WTC11 (cell line): ENCODE measurements at regions of chr17 and their contacts with region 1.

Region 1: GRCh38 chr17:40531051-40531991 is 29.9 kb upstream of the TNS4 start:
- DNase-seq: peak; percentile 8
- ATAC-seq: no peak
- H3K4me3 Mint-ChIP-seq: no peak overlapping the region
- H3K27ac Mint-ChIP-seq: no peak overlapping the region
- H3K4me1 Mint-ChIP-seq: peaks cover 19% of the 10 kb centered on the region
- H3K27me3 Mint-ChIP-seq: no peaks in the 10 kb centered on the region; the same call in 1 of the 2 replicates
- CTCF ChIP-seq: no peak

Region 2: DNA sequence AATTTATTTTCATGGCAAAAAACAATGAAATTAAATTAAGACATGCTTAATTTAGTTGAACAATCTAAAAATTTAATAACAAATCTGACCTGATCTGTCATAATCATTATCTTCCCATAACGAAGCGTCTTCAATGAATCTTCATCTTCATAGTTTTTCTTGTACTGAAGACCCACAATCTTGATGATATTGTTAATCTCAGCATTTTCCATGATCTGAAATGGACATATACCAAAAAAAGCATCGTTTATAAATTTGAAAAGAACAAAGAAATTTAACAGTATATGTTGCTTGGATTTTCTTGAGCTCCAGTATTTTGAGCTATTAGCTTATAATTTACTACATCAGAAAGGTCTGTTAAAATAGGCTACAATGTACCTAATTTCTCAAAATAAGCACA is 123.9 kb before region 1 on chr17:
- CTCF ChIA-PET with region 1: interaction called, 11 read pairs
- POLR2A ChIA-PET with region 1: no interaction called
- DNase-seq: no peak
- ATAC-seq: no peak
- H3K4me3 Mint-ChIP-seq: no peak overlapping the region
- H3K27ac Mint-ChIP-seq: peak overlapping the region; percentile 60; the same call in 1 of the 2 replicates
- H3K4me1 Mint-ChIP-seq: peaks cover 32% of the 10 kb centered on the region
- H3K27me3 Mint-ChIP-seq: no peaks in the 10 kb centered on the region
- CTCF ChIP-seq: no peak

Region 3: DNA sequence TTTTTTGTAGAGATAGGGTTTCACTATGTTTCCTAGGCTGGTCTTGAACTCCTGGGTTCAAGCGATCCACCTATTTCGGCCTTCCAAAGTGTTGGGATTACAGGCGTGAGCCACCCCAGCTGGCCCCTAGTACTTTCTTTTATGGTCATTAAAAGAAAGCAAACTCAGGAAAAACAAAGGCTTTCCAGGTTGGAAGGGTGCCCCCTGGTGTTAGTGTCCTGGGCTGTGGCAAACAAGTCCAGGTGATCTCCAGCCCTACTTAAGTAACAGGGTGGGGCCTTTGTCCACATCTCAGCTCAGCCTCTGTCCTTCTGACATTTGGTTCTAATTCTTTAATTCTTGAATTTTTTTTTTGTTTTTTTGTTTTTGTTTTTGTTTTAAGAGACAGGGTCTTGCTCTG is 81.1 kb before region 1 on chr17:
- CTCF ChIA-PET with region 1: interaction called, 124 read pairs
- POLR2A ChIA-PET with region 1: no interaction called
- DNase-seq: peak; percentile 78
- ATAC-seq: peak; percentile 46; the same call in 1 of the 2 replicates
- H3K4me3 Mint-ChIP-seq: no peak overlapping the region
- H3K27ac Mint-ChIP-seq: peak overlapping the region; percentile 88; the same call in 1 of the 2 replicates
- H3K4me1 Mint-ChIP-seq: peaks cover 44% of the 10 kb centered on the region
- H3K27me3 Mint-ChIP-seq: no peaks in the 10 kb centered on the region
- CTCF ChIP-seq: 0 out of 2 replicates have a peak, but pooled peaks have one; percentile 22

Region 4: GRCh38 chr17:40490289-40490853 is 41.0 kb before region 1 on chr17:
- CTCF ChIA-PET with region 1: interaction called, 23 read pairs
- POLR2A ChIA-PET with region 1: no interaction called
- DNase-seq: peak; percentile 46
- ATAC-seq: peak; percentile 77
- H3K4me3 Mint-ChIP-seq: peak overlapping the region; percentile 30; the same call in 1 of the 2 replicates
- H3K27ac Mint-ChIP-seq: peak overlapping the region; percentile 87
- H3K4me1 Mint-ChIP-seq: peaks cover 66% of the 10 kb centered on the region
- H3K27me3 Mint-ChIP-seq: peaks cover 2% of the 10 kb centered on the region; the same call in 1 of the 2 replicates
- CTCF ChIP-seq: no peak

Region 5: DNA sequence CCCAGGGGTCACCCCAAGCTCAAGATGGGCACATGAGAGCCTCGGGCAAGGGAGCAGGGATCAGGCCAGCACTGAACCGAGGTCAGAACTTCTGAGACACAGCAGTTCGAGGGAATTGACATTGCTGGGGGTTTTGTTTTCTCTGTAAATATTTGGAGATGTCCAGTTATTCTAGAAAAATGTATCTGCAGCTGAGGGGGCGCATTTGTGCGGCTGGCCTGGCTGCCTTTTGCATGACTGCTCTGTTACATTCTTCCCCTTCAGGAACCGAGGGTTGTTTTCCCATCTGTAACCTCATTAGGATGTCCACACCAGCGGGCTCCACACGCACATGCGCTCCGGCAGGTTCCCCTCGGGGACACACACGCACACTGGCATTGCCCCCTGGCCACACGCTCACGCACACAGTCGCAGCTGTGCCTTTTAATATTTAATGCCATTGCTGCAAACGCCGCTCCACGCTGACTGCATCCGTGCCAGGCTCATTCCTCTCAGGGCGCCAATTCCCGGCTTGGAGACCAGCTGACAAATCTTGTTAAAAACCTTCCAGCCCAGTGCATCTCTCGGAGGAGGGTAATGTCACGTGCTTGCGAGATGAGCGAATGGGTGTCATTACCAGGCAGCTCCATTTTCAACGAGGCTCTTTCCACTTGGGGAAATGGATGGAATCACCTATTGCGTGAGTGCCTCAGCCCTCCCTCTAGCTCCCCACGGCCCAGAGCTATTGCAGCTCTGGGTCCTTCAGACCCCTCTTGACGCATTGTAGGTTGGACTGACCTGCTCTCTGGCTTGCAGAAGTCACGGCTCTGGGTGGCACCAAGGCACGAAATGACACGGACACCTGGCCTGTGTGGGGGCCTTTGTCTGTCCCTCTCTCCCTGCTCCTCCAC is 20.8 kb after region 1 on chr17:
- CTCF ChIA-PET with region 1: interaction called, 127 read pairs
- POLR2A ChIA-PET with region 1: interaction called, 7 read pairs
- DNase-seq: peak; percentile 6
- ATAC-seq: no peak
- H3K4me3 Mint-ChIP-seq: no peak overlapping the region
- H3K27ac Mint-ChIP-seq: no peak overlapping the region
- H3K4me1 Mint-ChIP-seq: peaks cover 26% of the 10 kb centered on the region
- H3K27me3 Mint-ChIP-seq: peaks cover 2% of the 10 kb centered on the region
- CTCF ChIP-seq: no peak